Activated CD4-positive, alpha-beta T cell treated with anti-CD3 and anti-CD28 coated beads for 36 hours (primary cell): ENCODE measurements at regions of chr14 and their contacts with region 1.

Region 1: GRCh38 chr14:36580856-36581831 is 1.3 kb downstream of the NKX2-8 start:
- DNase-seq: peak; percentile 56
- ATAC-seq: peak; percentile 23
- H3K4me3 Mint-ChIP-seq: no peak overlapping the region
- H3K27ac Mint-ChIP-seq: no peak overlapping the region
- H3K4me1 Mint-ChIP-seq: peaks cover 5% of the 10 kb centered on the region
- H3K27me3 Mint-ChIP-seq: peaks cover 55% of the 10 kb centered on the region

Region 2: DNA sequence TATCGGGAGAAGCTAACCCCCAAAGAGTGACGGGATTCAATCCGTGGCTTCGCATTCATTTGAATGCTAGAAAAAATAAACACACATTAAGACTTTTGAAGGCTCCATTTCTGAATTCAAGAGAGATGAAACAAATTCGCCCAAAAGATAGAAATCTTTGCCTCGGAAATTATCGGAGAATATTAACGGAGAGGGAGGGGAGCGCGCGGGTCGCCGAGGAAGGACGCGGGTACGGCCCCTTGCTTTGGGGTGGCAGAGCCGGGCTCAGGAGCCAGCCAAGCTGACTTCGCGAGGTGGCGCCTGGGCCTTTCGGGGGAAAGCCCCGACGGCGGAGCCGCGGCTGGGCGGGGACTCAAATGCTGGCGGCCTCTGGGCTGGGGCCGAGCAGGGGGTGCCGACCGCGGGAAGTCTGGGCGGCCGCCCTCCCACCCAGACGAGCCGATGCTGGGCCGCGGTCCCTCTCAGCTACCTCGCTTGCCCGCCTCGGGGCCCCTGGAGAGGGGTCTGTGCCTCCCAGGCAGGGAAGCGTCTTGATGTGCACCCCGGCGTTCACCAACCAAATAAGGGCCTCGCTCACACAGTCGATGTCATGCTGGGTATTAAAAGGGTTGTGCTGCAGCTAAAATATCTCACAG is 75.8 kb before region 1 on chr14:
- CTCF ChIA-PET with region 1: no interaction called
- POLR2A ChIA-PET with region 1: no interaction called
- intact Hi-C with region 1: loop called in 1 of 2 experiments (anchors 5 kb)
- DNase-seq: peak; percentile 55
- ATAC-seq: peak; percentile 57
- H3K4me3 Mint-ChIP-seq: peak overlapping the region; percentile 34
- H3K27ac Mint-ChIP-seq: no peak overlapping the region
- H3K4me1 Mint-ChIP-seq: peaks cover 15% of the 10 kb centered on the region
- H3K27me3 Mint-ChIP-seq: peaks cover 73% of the 10 kb centered on the region

Region 3: DNA sequence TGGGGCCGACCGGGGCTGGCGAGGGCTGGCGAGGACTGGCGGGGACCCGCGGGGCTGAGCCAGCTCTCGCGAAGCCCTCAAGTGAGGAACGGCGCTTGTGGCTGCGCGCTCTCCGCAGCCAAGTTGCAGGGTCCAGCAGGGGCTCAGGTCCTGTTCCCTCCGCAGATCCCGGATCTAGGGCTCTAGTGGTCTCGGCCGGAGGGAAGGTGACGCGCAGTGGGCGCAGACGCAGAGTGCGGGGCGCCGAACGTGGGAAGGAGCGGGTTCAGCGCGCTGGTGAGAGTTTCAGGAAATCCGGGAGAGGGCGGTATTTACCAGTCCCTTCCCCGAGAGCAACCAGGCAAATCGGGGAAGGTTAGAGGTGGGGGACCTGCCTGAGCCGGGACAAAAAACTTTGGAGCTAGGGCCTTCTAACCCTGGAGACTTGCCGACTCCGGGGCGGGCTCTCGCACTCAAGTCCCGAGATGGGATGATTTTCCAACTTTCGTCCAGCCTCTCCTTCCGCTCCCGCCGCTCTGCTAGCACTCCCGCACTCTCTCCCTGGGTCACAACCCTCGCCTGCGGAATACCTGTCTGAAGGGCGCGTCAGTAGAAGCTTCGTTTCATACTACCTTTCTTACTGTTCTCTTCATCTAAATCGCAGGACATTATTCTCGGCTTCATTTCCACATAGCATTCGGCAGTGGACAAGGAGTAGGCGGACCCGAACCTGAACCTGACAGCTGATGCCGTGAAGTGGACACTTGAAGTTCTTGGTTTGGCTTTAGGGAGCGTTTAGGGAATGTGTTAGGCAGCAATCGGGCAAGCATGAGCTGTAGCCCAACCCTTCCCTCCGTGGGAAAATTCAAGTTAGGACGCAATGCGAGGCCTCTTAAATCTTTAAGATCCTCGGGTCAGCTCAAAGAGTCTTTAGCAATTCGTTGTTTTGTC is 66.9 kb after region 1 on chr14:
- CTCF ChIA-PET with region 1: no interaction called
- POLR2A ChIA-PET with region 1: no interaction called
- intact Hi-C with region 1: loop called in 1 of 2 experiments (anchors 5 kb)
- DNase-seq: peak; percentile 19
- ATAC-seq: no peak
- H3K4me3 Mint-ChIP-seq: no peak overlapping the region
- H3K27ac Mint-ChIP-seq: no peak overlapping the region
- H3K4me1 Mint-ChIP-seq: no peaks in the 10 kb centered on the region
- H3K27me3 Mint-ChIP-seq: peaks cover 50% of the 10 kb centered on the region

Region 4: GRCh38 chr14:36655963-36656686 is 75.0 kb after region 1 on chr14:
- CTCF ChIA-PET with region 1: no interaction called
- POLR2A ChIA-PET with region 1: no interaction called
- intact Hi-C with region 1: loop called (anchors 2 kb)
- DNase-seq: peak; percentile 69
- ATAC-seq: peak; percentile 58
- H3K4me3 Mint-ChIP-seq: no peak overlapping the region
- H3K27ac Mint-ChIP-seq: no peak overlapping the region
- H3K4me1 Mint-ChIP-seq: peaks cover 26% of the 10 kb centered on the region
- H3K27me3 Mint-ChIP-seq: peaks cover 80% of the 10 kb centered on the region

Region 5: GRCh38 chr14:36707570-36707969 is 126.4 kb after region 1 on chr14:
- CTCF ChIA-PET with region 1: no interaction called
- POLR2A ChIA-PET with region 1: no interaction called
- intact Hi-C with region 1: no loop called
- DNase-seq: no peak
- ATAC-seq: no peak
- H3K4me3 Mint-ChIP-seq: no peak overlapping the region
- H3K27ac Mint-ChIP-seq: no peak overlapping the region
- H3K4me1 Mint-ChIP-seq: no peaks in the 10 kb centered on the region
- H3K27me3 Mint-ChIP-seq: peaks cover 2% of the 10 kb centered on the region

Region 6: DNA sequence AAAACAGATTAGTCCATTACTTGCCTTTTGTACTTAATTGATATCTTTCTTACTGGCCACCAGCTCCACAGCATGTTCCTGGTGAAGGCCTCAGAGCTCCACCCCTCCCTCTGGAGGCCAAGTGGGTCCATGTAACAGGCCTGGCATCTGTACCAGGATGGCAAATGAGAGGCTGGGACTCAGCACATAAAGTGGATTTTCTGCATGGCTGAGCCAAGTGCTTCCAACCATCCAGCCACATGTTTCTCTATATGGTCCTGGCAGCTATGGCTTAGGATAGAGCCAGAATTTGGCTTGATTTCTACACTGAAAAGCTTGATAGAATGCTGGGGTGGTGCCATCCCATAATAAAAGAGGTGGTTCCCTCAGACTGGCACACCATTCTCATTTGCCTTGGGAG is 174.6 kb after region 1 on chr14:
- CTCF ChIA-PET with region 1: no interaction called
- POLR2A ChIA-PET with region 1: no interaction called
- intact Hi-C with region 1: no loop called
- DNase-seq: no peak
- ATAC-seq: no peak
- H3K4me3 Mint-ChIP-seq: no peak overlapping the region
- H3K27ac Mint-ChIP-seq: no peak overlapping the region
- H3K4me1 Mint-ChIP-seq: no peaks in the 10 kb centered on the region
- H3K27me3 Mint-ChIP-seq: no peaks in the 10 kb centered on the region

Region 7: GRCh38 chr14:36829547-36829946 is 248.4 kb after region 1 on chr14:
- CTCF ChIA-PET with region 1: no interaction called
- POLR2A ChIA-PET with region 1: no interaction called
- intact Hi-C with region 1: no loop called
- DNase-seq: no peak
- ATAC-seq: no peak
- H3K4me3 Mint-ChIP-seq: no peak overlapping the region
- H3K27ac Mint-ChIP-seq: no peak overlapping the region
- H3K4me1 Mint-ChIP-seq: no peaks in the 10 kb centered on the region
- H3K27me3 Mint-ChIP-seq: no peaks in the 10 kb centered on the region

Region 8: GRCh38 chr14:37587881-37588666 is 1006.9 kb after region 1 on chr14:
- CTCF ChIA-PET with region 1: no interaction called
- POLR2A ChIA-PET with region 1: no interaction called
- intact Hi-C with region 1: loop called in 1 of 2 experiments (anchors 5 kb)
- DNase-seq: no peak
- ATAC-seq: no peak
- H3K4me3 Mint-ChIP-seq: peak overlapping the region; percentile 5
- H3K27ac Mint-ChIP-seq: no peak overlapping the region
- H3K4me1 Mint-ChIP-seq: peaks cover 2% of the 10 kb centered on the region
- H3K27me3 Mint-ChIP-seq: peaks cover 65% of the 10 kb centered on the region